ENCODE measurements at regions of chrX and their contacts with region 1.

Region 1: DNA sequence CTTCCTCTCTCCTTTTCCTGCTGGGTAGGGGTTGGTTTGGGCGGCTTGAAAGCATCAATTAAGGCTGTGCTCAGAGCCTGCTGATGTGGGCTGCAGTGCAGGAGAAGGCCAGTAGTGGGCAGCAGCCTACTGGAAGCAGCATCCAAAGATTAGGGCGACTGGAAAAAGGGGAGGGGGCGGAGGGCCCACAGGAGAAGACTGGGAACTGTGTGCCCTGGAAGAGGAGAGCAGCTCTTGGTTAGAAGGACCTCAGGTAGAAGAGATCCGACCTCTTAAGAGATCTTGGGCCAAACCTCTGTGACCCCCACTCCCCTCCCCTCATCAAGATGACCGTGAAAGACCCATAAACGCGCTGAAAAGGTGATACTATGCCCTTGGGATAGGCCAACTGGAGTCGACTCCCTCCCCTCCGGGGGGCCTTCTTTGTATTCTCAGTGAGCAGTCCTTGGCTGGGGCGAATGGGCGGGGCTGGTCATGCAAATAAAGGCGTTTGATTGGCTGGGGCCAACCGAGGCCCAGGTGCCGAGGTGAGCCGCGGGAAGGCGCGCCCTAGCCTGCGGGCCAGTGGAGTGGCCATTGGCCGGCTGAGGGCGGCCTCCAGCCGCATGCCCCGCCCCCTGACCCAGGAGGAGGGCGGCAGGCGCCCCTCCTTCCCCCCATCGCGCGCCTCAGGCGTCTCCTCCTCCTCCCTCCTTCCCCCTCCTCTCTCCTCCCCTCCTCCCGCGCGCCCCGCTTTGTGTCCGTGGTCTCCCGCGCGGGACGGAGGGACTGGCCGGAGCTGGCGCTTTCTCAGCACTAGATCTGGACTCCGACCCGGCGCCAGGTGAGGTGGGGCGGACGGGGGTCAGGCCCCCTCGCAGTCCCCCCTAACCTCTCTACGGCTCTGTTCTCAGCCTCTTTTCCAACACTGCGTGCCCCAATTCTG is 10.1 kb downstream of the DLG3 start:
- DNase-seq: peak; percentile 49
- H3K4me3 ChIP-seq: peak overlapping the region; percentile 14 to 43 (median 31)
- H3K27ac ChIP-seq: no peak overlapping the region
- H3K4me1 ChIP-seq: peaks cover 6% of the 10 kb centered on the region
- H3K27me3 ChIP-seq: no peaks in the 10 kb centered on the region
- CTCF ChIP-seq: peak; percentile 73 to 82
- POLR2A ChIP-seq: no peak

Region 2: GRCh38 chrX:70444326-70444945 is 10.3 kb before region 1 on chrX and contains the start of gene DLG3:
- CTCF ChIA-PET with region 1: interaction called, 13 read pairs
- POLR2A ChIA-PET with region 1: no interaction called
- dilution Hi-C with region 1: no loop called
- intact Hi-C with region 1: no loop called
- DNase-seq: no peak
- H3K4me3 ChIP-seq: no peak within 1 kb of the TSS
- H3K27ac ChIP-seq: no peak within 1 kb of the TSS
- H3K4me1 ChIP-seq: no peaks in the 10 kb centered on the region
- H3K27me3 ChIP-seq: peaks cover 15 to 25% of the 10 kb centered on the region in 2 experiments
- CTCF ChIP-seq: no peak
- POLR2A ChIP-seq: no peak
- total RNA-seq, gene DLG3: 2.4 and 3.2 TPM in 2 replicates

Region 3: DNA sequence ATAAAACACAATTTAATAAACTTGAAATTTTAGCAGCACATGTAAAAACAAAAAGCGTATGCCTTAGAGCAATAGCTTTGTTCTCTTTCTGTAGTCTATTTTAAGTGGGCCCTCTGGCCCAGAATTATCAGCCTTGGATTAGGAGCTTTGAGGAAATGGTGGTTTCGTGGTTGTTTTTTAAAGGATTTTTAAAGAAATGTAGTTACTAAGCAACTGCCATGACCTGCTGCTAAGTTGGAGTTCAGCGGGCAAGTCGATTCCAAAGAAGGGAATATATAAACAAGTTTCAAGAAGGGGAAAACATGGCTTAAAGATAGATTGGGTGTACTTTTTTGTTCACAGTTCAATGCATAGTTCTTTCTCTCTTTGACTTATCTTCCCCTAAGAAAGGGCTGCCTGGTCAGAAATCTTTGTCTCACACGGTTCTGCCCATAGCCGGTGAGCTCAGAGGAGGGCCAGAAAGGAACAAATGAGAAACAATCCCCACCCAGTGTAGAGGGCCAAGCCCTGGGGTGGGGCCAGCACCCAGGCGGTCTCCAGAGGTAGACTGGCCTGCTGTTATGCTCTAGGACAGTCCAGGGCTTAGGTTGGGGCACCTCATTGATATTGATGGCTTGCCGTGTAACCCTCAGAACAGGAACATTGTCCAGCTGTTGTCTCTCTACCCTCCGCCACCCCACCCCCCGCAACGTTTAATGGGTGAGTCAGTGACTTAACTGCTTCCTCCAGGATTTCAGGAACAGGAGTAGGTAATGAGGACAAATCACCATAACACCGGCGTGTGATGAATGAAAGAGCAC is 22.4 kb after region 1 on chrX:
- CTCF ChIA-PET with region 1: interaction called, 7 read pairs
- POLR2A ChIA-PET with region 1: no interaction called
- dilution Hi-C with region 1: no loop called
- intact Hi-C with region 1: loop called (anchors 2 kb)
- DNase-seq: peak; percentile 55
- H3K4me3 ChIP-seq: no peak overlapping the region
- H3K27ac ChIP-seq: peak overlapping the region; percentile 66
- H3K4me1 ChIP-seq: peaks cover 40% of the 10 kb centered on the region
- H3K27me3 ChIP-seq: no peaks in the 10 kb centered on the region
- CTCF ChIP-seq: no peak
- POLR2A ChIP-seq: no peak

Region 4: GRCh38 chrX:70554081-70554480 is 99.4 kb after region 1 on chrX:
- CTCF ChIA-PET with region 1: interaction called, 47 read pairs
- POLR2A ChIA-PET with region 1: no interaction called
- dilution Hi-C with region 1: no loop called
- intact Hi-C with region 1: loop called (anchors 1 kb)
- DNase-seq: peak; percentile 9
- H3K4me3 ChIP-seq: no peak overlapping the region
- H3K27ac ChIP-seq: no peak overlapping the region
- H3K4me1 ChIP-seq: no peaks in the 10 kb centered on the region
- H3K27me3 ChIP-seq: no peaks in the 10 kb centered on the region
- CTCF ChIP-seq: no peak
- POLR2A ChIP-seq: no peak

Region 5: DNA sequence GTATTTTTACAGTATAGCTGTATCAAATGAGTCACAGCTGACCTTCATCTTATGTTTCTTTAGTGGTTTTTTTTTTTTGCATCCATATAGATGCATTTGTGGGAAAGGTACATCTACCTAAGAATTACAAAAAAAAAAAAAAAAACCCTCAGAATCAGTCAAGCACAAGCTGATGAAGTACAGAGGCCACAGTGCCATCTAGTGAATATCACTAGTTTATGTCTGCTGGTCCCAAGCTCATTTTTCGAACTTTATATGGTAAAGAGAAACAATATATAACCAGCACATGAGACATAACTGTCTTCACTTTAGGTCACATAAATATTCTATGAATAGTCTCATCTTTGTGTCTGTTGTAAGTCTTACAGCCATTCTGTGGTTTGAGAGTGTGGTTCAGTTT is 210.0 kb after region 1 on chrX:
- CTCF ChIA-PET with region 1: interaction called, 43 read pairs
- POLR2A ChIA-PET with region 1: no interaction called
- dilution Hi-C with region 1: no loop called
- intact Hi-C with region 1: loop called (anchors 1 kb)
- DNase-seq: peak; percentile 13
- H3K4me3 ChIP-seq: no peak overlapping the region
- H3K27ac ChIP-seq: no peak overlapping the region
- H3K4me1 ChIP-seq: no peaks in the 10 kb centered on the region
- H3K27me3 ChIP-seq: no peaks in the 10 kb centered on the region
- CTCF ChIP-seq: peak in 1 of 2 donors; percentile 13
- POLR2A ChIP-seq: no peak

Region 6: GRCh38 chrX:70762285-70762684 is 307.6 kb after region 1 on chrX:
- CTCF ChIA-PET with region 1: no interaction called
- POLR2A ChIA-PET with region 1: no interaction called
- dilution Hi-C with region 1: no loop called
- intact Hi-C with region 1: loop called (anchors 5 kb)
- DNase-seq: no peak
- H3K4me3 ChIP-seq: no peak overlapping the region
- H3K27ac ChIP-seq: no peak overlapping the region
- H3K4me1 ChIP-seq: no peaks in the 10 kb centered on the region
- H3K27me3 ChIP-seq: no peaks in the 10 kb centered on the region
- CTCF ChIP-seq: no peak
- POLR2A ChIP-seq: no peak

Measured in endothelial cell of umbilical vein (primary cell).